ENCODE measurements at regions of chr4 and their contacts with region 1.

Region 1: GRCh38 chr4:173934201-173934600 is 349.3 kb downstream of the FBXO8 start:
- DNase-seq: no peak
- ATAC-seq: no peak
- H3K4me3 ChIP-seq: no peak overlapping the region
- H3K4me3 Mint-ChIP-seq: no peak overlapping the region
- H3K27ac ChIP-seq: no peak overlapping the region
- H3K27ac Mint-ChIP-seq: no peak overlapping the region
- H3K4me1 ChIP-seq: no peaks in the 10 kb centered on the region
- H3K4me1 Mint-ChIP-seq: no peaks in the 10 kb centered on the region
- H3K27me3 ChIP-seq: no peaks in the 10 kb centered on the region
- H3K27me3 Mint-ChIP-seq: peaks cover 0 to 15% (median 10%) of the 10 kb centered on the region in 5 donors

Region 2: GRCh38 chr4:173432430-173432829 is 501.8 kb before region 1 on chr4:
- CTCF ChIA-PET with region 1: no interaction called
- POLR2A ChIA-PET with region 1: no interaction called
- intact Hi-C with region 1: loop called in 1 of 2 experiments (anchors 5 kb)
- DNase-seq: no peak
- ATAC-seq: no peak
- H3K4me3 ChIP-seq: no peak overlapping the region
- H3K4me3 Mint-ChIP-seq: no peak overlapping the region
- H3K27ac ChIP-seq: no peak overlapping the region
- H3K27ac Mint-ChIP-seq: peak overlapping the region in 2 of 9 donors; percentile 45 to 86
- H3K4me1 ChIP-seq: no peaks in the 10 kb centered on the region
- H3K4me1 Mint-ChIP-seq: peaks cover 0 to 25% (median 11%) of the 10 kb centered on the region in 7 donors
- H3K27me3 ChIP-seq: no peaks in the 10 kb centered on the region
- H3K27me3 Mint-ChIP-seq: peaks cover 0 to 15% (median 0%) of the 10 kb centered on the region in 5 donors